ENCODE measurements at regions of chr3 and their contacts with region 1.

Region 1: GRCh38 chr3:113745273-113746068 is 578 bp downstream of the NAA50 start:
- DNase-seq: peak in 8 of 10 donors; percentile 30 to 89 (median 38)

Region 2: DNA sequence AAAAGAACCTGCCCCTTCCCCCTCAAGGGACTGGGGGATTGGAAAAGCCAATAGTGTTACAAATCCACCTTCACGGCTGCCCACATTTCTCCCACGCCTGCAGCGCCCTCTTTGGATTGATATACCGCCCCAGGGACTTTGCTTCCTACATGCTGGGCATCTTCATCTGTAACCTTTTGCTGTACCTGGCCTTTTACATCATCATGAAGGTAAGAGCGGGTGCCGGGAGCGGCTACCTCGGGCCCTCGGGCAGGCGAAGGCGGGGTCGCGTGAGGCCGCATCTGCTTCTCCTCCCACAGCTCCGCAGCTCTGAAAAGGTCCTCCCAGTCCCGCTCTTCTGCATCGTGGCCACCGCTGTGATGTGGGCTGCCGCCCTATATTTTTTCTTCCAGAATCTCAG is 122.1 kb before region 1 on chr3:
- intact Hi-C with region 1: no loop called
- DNase-seq: peak in 1 of 10 donors; percentile 73

Region 3: DNA sequence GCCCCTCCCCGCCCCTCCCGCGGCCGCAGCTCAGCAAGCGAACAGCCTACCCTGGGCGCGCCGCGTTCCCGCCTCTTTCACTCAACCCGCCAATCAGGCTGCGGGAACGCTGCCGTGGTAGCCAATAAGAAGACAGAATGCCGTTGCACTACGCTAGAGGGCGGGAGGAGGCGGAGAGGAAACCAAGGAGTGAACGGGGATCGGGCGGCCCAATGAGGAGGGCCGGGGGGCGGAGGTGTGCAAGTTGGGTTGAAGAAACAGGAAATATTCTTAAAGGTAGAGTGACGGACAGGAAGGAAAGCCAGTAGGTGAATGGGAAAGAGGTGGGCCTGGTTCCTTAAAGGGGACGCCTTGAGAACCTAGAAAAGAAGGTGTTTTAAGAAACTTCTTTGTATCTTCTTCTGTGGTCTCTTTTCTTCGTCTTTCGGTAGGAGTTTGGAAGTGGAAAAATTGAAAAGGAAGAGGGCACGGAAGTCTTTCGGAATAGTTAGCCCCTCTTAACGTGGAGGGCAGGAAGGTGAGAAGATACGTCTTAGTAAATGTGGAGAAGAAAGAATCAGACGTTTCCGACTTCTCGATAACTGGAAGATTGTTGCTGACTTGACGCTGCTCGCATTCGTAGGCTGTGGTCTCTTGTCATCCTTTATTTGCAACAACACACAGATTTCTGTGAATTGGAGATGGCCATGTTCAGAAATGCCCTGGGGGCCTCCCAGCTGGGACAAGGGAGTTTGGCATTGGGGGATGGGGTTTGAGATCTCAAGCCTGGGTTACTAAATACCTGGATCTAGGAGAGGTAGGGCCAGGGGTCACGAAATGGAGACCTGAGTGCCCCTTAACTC is 48.6 kb before region 1 on chr3:
- intact Hi-C with region 1: loop called (anchors 1 kb)
- DNase-seq: peak; percentile 99 to 100 (median 100)

Region 4: GRCh38 chr3:113825090-113825489 is 79.6 kb after region 1 on chr3:
- intact Hi-C with region 1: no loop called
- DNase-seq: no peak

Region 5: DNA sequence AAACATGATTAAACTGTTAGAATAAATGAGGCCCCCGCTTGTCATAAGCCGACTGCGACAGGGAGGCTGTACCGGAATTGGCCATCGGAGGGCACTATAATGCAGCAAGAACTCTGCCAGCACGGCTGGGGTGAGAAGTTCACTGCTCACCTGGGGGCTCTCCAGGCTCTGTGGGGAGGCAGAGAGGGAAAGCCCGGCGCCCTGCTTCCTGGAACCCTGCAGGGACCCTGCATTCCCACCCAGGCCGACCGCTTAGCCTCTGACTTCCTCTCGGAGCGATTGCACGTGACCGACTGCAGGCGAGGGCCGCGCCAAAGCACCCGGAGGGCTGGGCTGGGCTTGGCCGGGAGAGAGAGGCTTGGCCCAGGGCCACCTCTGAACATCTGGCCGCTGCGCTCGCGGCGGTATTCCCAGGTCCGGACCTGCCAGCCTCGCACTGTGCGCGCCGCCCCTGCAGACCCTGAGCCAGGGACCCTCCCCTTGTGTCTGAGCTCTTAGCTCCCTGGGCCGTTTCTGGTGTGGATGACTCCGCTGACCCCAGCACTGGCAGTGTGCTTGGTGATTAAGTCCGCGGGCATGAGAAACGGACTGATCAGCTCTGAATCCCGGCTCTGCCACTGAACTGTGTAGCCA is 407.2 kb after region 1 on chr3:
- intact Hi-C with region 1: loop called (anchors 10 kb)
- DNase-seq: peak; percentile 38 to 94 (median 74)

Measured in posterior cingulate gyrus (tissue), 11 donors.